Caco-2 (cell line): ENCODE measurements at regions of chr11 and their contacts with region 1.

Region 1: DNA sequence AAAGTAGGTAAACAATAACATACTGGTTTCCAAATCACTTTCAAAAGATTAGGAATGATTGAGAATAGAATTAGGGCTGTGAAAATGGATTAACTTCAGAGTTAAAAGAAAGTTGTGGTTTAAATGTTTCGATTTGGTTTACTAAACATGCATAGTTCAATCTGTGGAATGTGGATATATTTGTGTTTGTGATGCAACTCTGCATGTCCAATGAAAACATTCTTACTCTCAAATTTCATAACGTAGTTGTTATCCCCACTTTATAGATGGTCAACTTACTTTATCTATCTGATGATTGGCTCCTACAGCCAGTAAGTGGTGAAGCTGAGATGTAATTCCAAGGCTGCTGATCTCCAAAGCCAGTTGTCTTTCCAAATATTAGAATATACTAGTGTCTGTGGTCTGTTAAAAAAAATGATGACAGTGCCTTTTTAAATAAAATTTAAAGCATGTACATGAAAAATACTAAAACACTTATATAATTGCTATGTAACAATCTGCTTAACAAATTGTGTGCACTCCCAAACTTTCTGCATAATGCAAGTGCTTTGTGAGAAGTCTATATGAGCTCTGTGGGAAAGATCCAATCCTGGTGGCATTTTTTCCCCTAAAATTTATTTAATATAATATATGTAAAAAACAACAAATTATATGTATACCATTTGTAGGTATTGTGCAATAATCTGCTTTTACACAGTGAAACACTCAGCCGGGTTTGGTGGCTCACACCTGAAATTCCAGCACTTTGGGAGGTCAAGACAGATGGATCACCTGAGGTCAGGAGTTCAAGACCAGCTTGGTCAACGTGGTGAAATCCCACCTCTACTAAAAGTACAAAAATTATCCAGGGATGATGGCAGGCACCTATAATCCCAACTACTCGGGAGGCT is 9.7 kb upstream of the SIK3 start:
- DNase-seq: no peak
- H3K4me3 ChIP-seq: no peak overlapping the region
- H3K4me3 Mint-ChIP-seq: no peak overlapping the region
- H3K27ac Mint-ChIP-seq: no peak overlapping the region
- H3K4me1 ChIP-seq: peaks cover 3% of the 10 kb centered on the region; the same call in 1 of the 2 replicates
- H3K4me1 Mint-ChIP-seq: no peaks in the 10 kb centered on the region
- H3K27me3 ChIP-seq: no peaks in the 10 kb centered on the region
- H3K27me3 Mint-ChIP-seq: no peaks in the 10 kb centered on the region
- CTCF ChIP-seq: no peak

Region 2: GRCh38 chr11:116772443-116773202 is 335.3 kb before region 1 on chr11 and contains the start of gene BUD13:
- CTCF ChIA-PET with region 1: no interaction called
- POLR2A ChIA-PET with region 1: no interaction called
- intact Hi-C with region 1: loop called (anchors 1 kb)
- DNase-seq: peak; percentile 96 to 99
- H3K4me3 ChIP-seq: peak within 1 kb of the TSS; percentile 93
- H3K4me3 Mint-ChIP-seq: peak within 1 kb of the TSS; percentile 99
- H3K27ac Mint-ChIP-seq: peak within 1 kb of the TSS; percentile 98
- H3K4me1 ChIP-seq: peaks cover 26% of the 10 kb centered on the region
- H3K4me1 Mint-ChIP-seq: peaks cover 37% of the 10 kb centered on the region
- H3K27me3 ChIP-seq: no peaks in the 10 kb centered on the region
- H3K27me3 Mint-ChIP-seq: no peaks in the 10 kb centered on the region
- CTCF ChIP-seq: peak in 1 of 2 experiments; percentile 54
- total RNA-seq, gene BUD13: 37.8 and 42.6 TPM in 2 replicates

Region 3: DNA sequence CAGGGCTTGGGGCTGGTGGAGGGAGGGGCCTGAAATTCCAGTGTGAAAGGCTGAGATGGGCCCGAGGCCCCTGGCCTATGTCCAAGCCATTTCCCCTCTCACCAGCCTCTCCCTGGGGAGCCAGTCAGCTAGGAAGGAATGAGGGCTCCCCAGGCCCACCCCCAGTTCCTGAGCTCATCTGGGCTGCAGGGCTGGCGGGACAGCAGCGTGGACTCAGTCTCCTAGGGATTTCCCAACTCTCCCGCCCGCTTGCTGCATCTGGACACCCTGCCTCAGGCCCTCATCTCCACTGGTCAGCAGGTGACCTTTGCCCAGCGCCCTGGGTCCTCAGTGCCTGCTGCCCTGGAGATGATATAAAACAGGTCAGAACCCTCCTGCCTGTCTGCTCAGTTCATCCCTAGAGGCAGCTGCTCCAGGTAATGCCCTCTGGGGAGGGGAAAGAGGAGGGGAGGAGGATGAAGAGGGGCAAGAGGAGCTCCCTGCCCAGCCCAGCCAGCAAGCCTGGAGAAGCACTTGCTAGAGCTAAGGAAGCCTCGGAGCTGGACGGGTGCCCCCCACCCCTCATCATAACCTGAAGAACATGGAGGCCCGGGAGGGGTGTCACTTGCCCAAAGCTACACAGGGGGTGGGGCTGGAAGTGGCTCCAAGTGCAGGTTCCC is 278.3 kb before region 1 on chr11 and contains the start of gene APOC3:
- CTCF ChIA-PET with region 1: interaction called, 6 read pairs
- POLR2A ChIA-PET with region 1: no interaction called
- intact Hi-C with region 1: loop called (anchors 1 kb)
- DNase-seq: peak; percentile 93 to 96
- H3K4me3 ChIP-seq: peak within 1 kb of the TSS; percentile 3; the same call in 1 of the 2 replicates
- H3K4me3 Mint-ChIP-seq: peak within 1 kb of the TSS; percentile 50
- H3K27ac Mint-ChIP-seq: peak within 1 kb of the TSS; percentile 89
- H3K4me1 ChIP-seq: peaks cover 84% of the 10 kb centered on the region
- H3K4me1 Mint-ChIP-seq: peaks cover 49% of the 10 kb centered on the region
- H3K27me3 ChIP-seq: no peaks in the 10 kb centered on the region
- H3K27me3 Mint-ChIP-seq: no peaks in the 10 kb centered on the region
- CTCF ChIP-seq: no peak
- total RNA-seq, gene APOC3: 103 and 128 TPM in 2 replicates

Region 4: GRCh38 chr11:116879800-116880625 is 227.9 kb before region 1 on chr11:
- CTCF ChIA-PET with region 1: interaction called, 14 read pairs
- POLR2A ChIA-PET with region 1: no interaction called
- intact Hi-C with region 1: loop called (anchors 1 kb)
- DNase-seq: peak in 1 of 2 experiments; percentile 64
- H3K4me3 ChIP-seq: no peak overlapping the region
- H3K4me3 Mint-ChIP-seq: no peak overlapping the region
- H3K27ac Mint-ChIP-seq: no peak overlapping the region
- H3K4me1 ChIP-seq: peaks cover 23% of the 10 kb centered on the region
- H3K4me1 Mint-ChIP-seq: peaks cover 40% of the 10 kb centered on the region
- H3K27me3 ChIP-seq: no peaks in the 10 kb centered on the region
- H3K27me3 Mint-ChIP-seq: no peaks in the 10 kb centered on the region
- CTCF ChIP-seq: peak; percentile 71 to 96

Region 5: GRCh38 chr11:117087446-117087845 is 20.5 kb before region 1 on chr11:
- CTCF ChIA-PET with region 1: no interaction called
- POLR2A ChIA-PET with region 1: no interaction called
- intact Hi-C with region 1: no loop called
- DNase-seq: peak; percentile 43 to 74
- H3K4me3 ChIP-seq: no peak overlapping the region
- H3K4me3 Mint-ChIP-seq: peak overlapping the region; percentile 4
- H3K27ac Mint-ChIP-seq: peak overlapping the region; percentile 12
- H3K4me1 ChIP-seq: peaks cover 79% of the 10 kb centered on the region
- H3K4me1 Mint-ChIP-seq: peaks cover 54% of the 10 kb centered on the region
- H3K27me3 ChIP-seq: no peaks in the 10 kb centered on the region
- H3K27me3 Mint-ChIP-seq: no peaks in the 10 kb centered on the region
- CTCF ChIP-seq: no peak

Region 6: GRCh38 chr11:117121176-117121575 is 13.2 kb after region 1 on chr11:
- CTCF ChIA-PET with region 1: interaction called, 17 read pairs
- POLR2A ChIA-PET with region 1: no interaction called
- intact Hi-C with region 1: no loop called
- DNase-seq: no peak
- H3K4me3 ChIP-seq: no peak overlapping the region
- H3K4me3 Mint-ChIP-seq: no peak overlapping the region
- H3K27ac Mint-ChIP-seq: no peak overlapping the region
- H3K4me1 ChIP-seq: no peaks in the 10 kb centered on the region
- H3K4me1 Mint-ChIP-seq: no peaks in the 10 kb centered on the region
- H3K27me3 ChIP-seq: no peaks in the 10 kb centered on the region
- H3K27me3 Mint-ChIP-seq: peaks cover 9% of the 10 kb centered on the region
- CTCF ChIP-seq: no peak

Region 7: GRCh38 chr11:117226388-117227385 is 118.7 kb after region 1 on chr11:
- CTCF ChIA-PET with region 1: interaction called, 7 read pairs
- POLR2A ChIA-PET with region 1: no interaction called
- intact Hi-C with region 1: loop called (anchors 1 kb)
- DNase-seq: peak; percentile 71 to 81
- H3K4me3 ChIP-seq: no peak overlapping the region
- H3K4me3 Mint-ChIP-seq: no peak overlapping the region
- H3K27ac Mint-ChIP-seq: no peak overlapping the region
- H3K4me1 ChIP-seq: peaks cover 38% of the 10 kb centered on the region
- H3K4me1 Mint-ChIP-seq: peaks cover 38% of the 10 kb centered on the region
- H3K27me3 ChIP-seq: no peaks in the 10 kb centered on the region
- H3K27me3 Mint-ChIP-seq: no peaks in the 10 kb centered on the region
- CTCF ChIP-seq: peak; percentile 93 to 96